Heart right ventricle (tissue), 16 donors: ENCODE measurements at regions of chr12 and their contacts with region 1.

Region 1: GRCh38 chr12:92928962-92929915 is at the start of gene EEA1:
- DNase-seq: peak; percentile 97 to 98
- ATAC-seq: peak; percentile 95 to 98 (median 95)
- H3K4me3 ChIP-seq: peak within 1 kb of the TSS; percentile 66 to 94 (median 87)
- H3K27ac ChIP-seq: peak within 1 kb of the TSS; percentile 92 to 99 (median 97)
- H3K4me1 ChIP-seq: peaks cover 0 to 51% (median 43%) of the 10 kb centered on the region in 9 donors
- H3K27me3 ChIP-seq: no peaks in the 10 kb centered on the region
- CTCF ChIP-seq: peak in 5 of 9 donors; percentile 7 to 56 (median 41)
- total RNA-seq, gene EEA1: 21.7 to 41.6 (median 33.8) TPM

Region 2: GRCh38 chr12:92802906-92803305 is 126.3 kb before region 1 on chr12:
- intact Hi-C with region 1: loop called in 1 of 10 experiments (anchors 10 kb)
- DNase-seq: no peak
- ATAC-seq: no peak
- H3K4me3 ChIP-seq: no peak overlapping the region
- H3K27ac ChIP-seq: peak overlapping the region in 2 of 10 donors; percentile 20 to 52
- H3K4me1 ChIP-seq: peaks cover 0 to 15% (median 6%) of the 10 kb centered on the region in 9 donors
- H3K27me3 ChIP-seq: no peaks in the 10 kb centered on the region
- CTCF ChIP-seq: no peak

Region 3: DNA sequence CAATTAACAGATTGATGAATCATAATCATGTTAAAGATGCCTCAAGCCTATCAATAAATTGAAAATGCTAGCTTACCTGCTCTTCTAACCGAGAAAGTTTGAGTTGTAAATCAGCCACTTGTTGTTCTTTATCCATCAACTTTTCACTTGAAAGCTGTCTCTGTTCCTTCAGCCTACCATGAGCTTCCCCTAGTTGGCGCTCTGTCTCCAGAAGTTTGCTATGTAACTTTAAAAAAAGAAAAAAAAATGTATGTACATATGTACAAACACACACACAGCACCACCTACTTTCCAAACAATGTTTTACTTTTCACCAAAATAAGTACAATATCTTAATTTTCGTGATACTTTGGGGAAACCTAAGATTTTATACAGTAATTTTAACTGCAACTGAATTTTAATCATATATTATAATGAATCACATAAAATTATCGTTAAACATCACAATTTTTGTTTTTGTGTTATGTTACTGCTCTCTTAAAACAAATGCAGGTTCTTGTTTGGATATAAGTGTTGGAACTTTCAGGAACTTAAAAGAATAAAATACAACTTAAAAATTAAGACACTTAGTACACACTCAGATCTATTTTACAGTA is 101.3 kb before region 1 on chr12:
- intact Hi-C with region 1: loop called in 2 of 10 experiments (anchors 10 kb)
- DNase-seq: no peak
- ATAC-seq: no peak
- H3K4me3 ChIP-seq: no peak overlapping the region
- H3K27ac ChIP-seq: no peak overlapping the region
- H3K4me1 ChIP-seq: no peaks in the 10 kb centered on the region
- H3K27me3 ChIP-seq: no peaks in the 10 kb centered on the region
- CTCF ChIP-seq: peak in 7 of 9 donors; percentile 18 to 63 (median 50)

Region 4: GRCh38 chr12:92859650-92860386 is 69.4 kb before region 1 on chr12:
- intact Hi-C with region 1: loop called in 1 of 10 experiments (anchors 5 kb)
- DNase-seq: no peak
- ATAC-seq: peak in 5 of 8 donors; percentile 44 to 63 (median 49)
- H3K4me3 ChIP-seq: no peak overlapping the region
- H3K27ac ChIP-seq: peak overlapping the region in 1 of 10 donors; percentile 10
- H3K4me1 ChIP-seq: peaks cover 0 to 14% (median 0%) of the 10 kb centered on the region in 9 donors
- H3K27me3 ChIP-seq: no peaks in the 10 kb centered on the region
- CTCF ChIP-seq: peak in 1 of 9 donors; percentile 7